Tibial artery (tissue), 4 donors: ENCODE measurements at regions of chr14 and their contacts with region 1.

Region 1: GRCh38 chr14:61147831-61148549 is 133.1 kb downstream of the TMEM30B start:
- DNase-seq: no peak
- H3K4me3 ChIP-seq: no peak overlapping the region
- H3K27ac ChIP-seq: peak overlapping the region; percentile 59 to 73
- H3K4me1 ChIP-seq: peaks cover 0 to 70% (median 24%) of the 10 kb centered on the region in 4 donors
- H3K27me3 ChIP-seq: no peaks in the 10 kb centered on the region
- CTCF ChIP-seq: no peak

Region 2: DNA sequence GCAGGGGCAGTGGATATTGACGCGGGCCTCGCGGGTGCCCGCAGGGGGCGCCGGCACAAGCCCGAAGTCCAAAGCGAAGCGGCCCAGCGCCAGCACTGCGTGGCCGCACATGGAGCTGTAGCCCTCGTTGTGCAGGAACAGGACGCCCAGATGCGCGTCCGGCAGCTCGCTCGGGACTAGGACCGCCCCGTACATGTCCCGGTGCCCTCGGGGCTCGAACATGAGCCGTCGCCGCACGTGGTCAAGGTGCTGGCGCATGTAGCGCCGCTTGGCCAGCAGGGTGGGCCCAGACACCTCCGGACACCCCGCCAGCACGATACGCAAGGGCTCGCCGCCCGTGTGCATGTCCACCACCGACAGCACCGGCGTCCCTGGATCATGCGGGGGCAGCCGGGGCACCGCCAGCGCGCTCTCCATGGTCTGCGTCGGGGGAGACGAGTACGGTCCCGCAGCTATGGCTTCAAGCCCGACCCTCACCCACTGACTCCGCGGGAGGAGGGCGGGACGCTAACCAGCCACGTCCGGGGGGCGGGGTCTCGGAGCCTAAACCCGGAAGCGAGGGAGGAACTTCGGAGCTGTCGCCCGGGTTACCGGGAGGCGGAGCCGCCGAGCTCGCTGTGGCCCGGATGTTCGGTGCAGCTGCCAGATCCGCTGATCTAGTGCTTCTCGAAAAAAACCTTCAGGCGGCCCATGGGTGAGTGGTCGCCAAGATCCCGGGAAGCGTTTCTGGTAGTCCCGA is 1663.9 kb before region 1 on chr14 and contains the starts of genes JKAMP and L3HYPDH:
- intact Hi-C with region 1: loop called (anchors 10 kb)
- DNase-seq: peak; percentile 98
- H3K4me3 ChIP-seq: peak within 1 kb of the TSS; percentile 76 to 88
- H3K27ac ChIP-seq: peak within 1 kb of the TSS; percentile 88 to 96
- H3K4me1 ChIP-seq: peaks cover 0 to 63% (median 35%) of the 10 kb centered on the region in 4 donors
- H3K27me3 ChIP-seq: no peaks in the 10 kb centered on the region
- CTCF ChIP-seq: peak; percentile 63 to 74